ENCODE measurements at regions of chr7 and their contacts with region 1.

Region 1: DNA sequence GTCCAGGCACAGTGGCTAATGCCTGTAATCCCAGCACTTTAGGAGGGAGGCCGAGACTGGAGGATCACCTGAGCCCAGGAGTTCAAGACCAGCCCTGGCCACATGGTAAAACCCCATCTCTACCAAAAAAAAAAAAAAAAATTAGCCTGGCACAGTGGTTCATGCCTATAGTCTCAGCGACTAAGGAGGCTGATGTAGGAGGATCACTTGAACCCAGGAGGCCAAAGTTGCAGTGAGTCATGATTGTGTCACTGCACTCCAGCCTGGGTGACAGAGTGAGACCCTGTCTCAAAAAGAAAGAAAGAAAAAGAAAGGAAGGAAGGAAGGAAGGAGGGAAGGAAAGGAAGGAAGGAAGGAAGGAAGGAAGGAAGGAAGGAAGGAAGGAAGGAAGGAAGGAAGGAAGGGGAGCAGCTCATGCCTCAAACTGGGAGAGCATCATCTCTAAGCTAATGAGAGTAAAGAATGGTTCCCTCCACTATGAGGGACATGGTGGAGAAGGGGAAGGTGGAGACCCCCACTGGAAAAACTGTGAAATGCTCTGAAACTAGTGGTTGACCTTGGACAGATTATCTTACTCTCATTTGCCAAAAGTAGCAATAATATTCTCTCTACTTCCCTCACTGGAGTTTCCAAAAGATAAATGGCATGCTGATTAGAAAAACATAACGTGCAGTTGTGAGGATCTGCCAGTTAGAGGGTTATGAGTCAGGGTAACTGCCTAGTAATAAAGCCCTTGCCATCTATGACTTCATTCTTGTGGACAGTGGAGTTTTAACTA is 16.8 kb downstream of the GIMAP5 start:
- DNase-seq: peak; percentile 95
- H3K4me3 ChIP-seq: no peak overlapping the region
- H3K27ac ChIP-seq: peak overlapping the region; percentile 2
- H3K4me1 ChIP-seq: peaks cover 22% of the 10 kb centered on the region
- H3K27me3 ChIP-seq: no peaks in the 10 kb centered on the region
- CTCF ChIP-seq: peak; percentile 21 to 55
- POLR2A ChIP-seq: no peak

Region 2: GRCh38 chr7:150356265-150356897 is 397.6 kb before region 1 on chr7:
- CTCF ChIA-PET with region 1: interaction called, 4 read pairs
- POLR2A ChIA-PET with region 1: no interaction called
- dilution Hi-C with region 1: no loop called
- intact Hi-C with region 1: loop called (anchors 2 kb)
- DNase-seq: peak; percentile 64
- H3K4me3 ChIP-seq: no peak overlapping the region
- H3K27ac ChIP-seq: no peak overlapping the region
- H3K4me1 ChIP-seq: no peaks in the 10 kb centered on the region
- H3K27me3 ChIP-seq: peaks cover 0 to 2% of the 10 kb centered on the region in 2 experiments
- CTCF ChIP-seq: peak; percentile 57 to 62
- POLR2A ChIP-seq: no peak

Region 3: GRCh38 chr7:150466477-150466876 is 287.5 kb before region 1 on chr7:
- CTCF ChIA-PET with region 1: no interaction called
- POLR2A ChIA-PET with region 1: no interaction called
- dilution Hi-C with region 1: no loop called
- intact Hi-C with region 1: loop called (anchors 1 kb)
- DNase-seq: peak; percentile 93
- H3K4me3 ChIP-seq: peak overlapping the region in 2 of 3 experiments; percentile 30 to 77
- H3K27ac ChIP-seq: peak overlapping the region; percentile 53
- H3K4me1 ChIP-seq: peaks cover 22% of the 10 kb centered on the region
- H3K27me3 ChIP-seq: no peaks in the 10 kb centered on the region
- CTCF ChIP-seq: no peak
- POLR2A ChIP-seq: no peak

Region 4: GRCh38 chr7:150514748-150515222 is 239.2 kb before region 1 on chr7 and contains the start of gene GIMAP7:
- CTCF ChIA-PET with region 1: no interaction called
- POLR2A ChIA-PET with region 1: no interaction called
- dilution Hi-C with region 1: no loop called
- intact Hi-C with region 1: loop called (anchors 1 kb)
- DNase-seq: peak; percentile 81
- H3K4me3 ChIP-seq: peak within 1 kb of the TSS; percentile 69 to 92 (median 91)
- H3K27ac ChIP-seq: peak within 1 kb of the TSS; percentile 61
- H3K4me1 ChIP-seq: peaks cover 21% of the 10 kb centered on the region
- H3K27me3 ChIP-seq: no peaks in the 10 kb centered on the region
- CTCF ChIP-seq: no peak
- POLR2A ChIP-seq: peak; percentile 81
- total RNA-seq, gene GIMAP7: 42.4 and 51.1 TPM in 2 replicates

Region 5: DNA sequence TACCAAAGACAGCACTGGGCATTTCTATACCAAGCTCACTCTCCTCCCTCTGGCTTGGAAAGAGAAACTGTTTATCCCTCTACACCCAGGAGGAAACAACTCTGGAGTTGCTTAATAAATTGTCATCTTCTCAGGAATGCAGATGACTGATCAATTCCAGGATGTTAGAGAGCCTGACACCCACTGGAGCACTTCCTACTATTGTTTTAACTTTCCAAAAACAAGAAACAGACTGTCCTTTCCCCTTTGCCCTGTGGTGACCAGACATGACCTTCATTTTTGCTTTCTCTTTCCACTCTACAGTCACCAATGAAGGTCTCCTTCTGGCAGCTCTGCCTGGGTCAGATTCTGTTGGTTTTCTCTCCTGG is 167.2 kb before region 1 on chr7:
- CTCF ChIA-PET with region 1: interaction called, 3 read pairs
- POLR2A ChIA-PET with region 1: no interaction called
- dilution Hi-C with region 1: no loop called
- intact Hi-C with region 1: loop called (anchors 1 kb)
- DNase-seq: peak; percentile 96
- H3K4me3 ChIP-seq: peak overlapping the region in 1 of 3 experiments; percentile 24
- H3K27ac ChIP-seq: peak overlapping the region; percentile 93
- H3K4me1 ChIP-seq: peaks cover 34% of the 10 kb centered on the region
- H3K27me3 ChIP-seq: no peaks in the 10 kb centered on the region
- CTCF ChIP-seq: no peak
- POLR2A ChIP-seq: no peak

Region 6: DNA sequence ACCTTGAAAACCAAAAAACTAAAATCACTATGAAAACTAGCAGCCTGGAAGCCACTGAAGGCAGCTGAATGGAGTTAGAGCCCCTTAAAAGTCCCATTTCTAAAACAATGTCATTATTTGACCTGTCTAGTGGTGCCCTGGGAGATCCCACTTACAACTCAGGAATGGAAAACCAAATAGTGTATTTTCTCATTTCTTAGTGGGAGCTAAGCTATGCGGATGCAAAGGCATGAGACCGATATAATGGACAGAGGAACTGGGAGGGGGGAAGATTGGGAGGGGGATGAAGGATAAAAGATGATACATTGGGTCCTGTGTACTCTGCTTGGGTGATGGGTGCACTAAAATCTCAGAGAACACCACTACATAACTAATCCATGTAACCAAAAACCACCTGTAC is 78.3 kb before region 1 on chr7:
- CTCF ChIA-PET with region 1: interaction called, 3 read pairs
- POLR2A ChIA-PET with region 1: no interaction called
- dilution Hi-C with region 1: no loop called
- intact Hi-C with region 1: loop called (anchors 2 kb)
- DNase-seq: peak; percentile 43
- H3K4me3 ChIP-seq: no peak overlapping the region
- H3K27ac ChIP-seq: peak overlapping the region; percentile 48
- H3K4me1 ChIP-seq: peaks cover 19% of the 10 kb centered on the region
- H3K27me3 ChIP-seq: no peaks in the 10 kb centered on the region
- CTCF ChIP-seq: no peak
- POLR2A ChIP-seq: no peak

Region 7: DNA sequence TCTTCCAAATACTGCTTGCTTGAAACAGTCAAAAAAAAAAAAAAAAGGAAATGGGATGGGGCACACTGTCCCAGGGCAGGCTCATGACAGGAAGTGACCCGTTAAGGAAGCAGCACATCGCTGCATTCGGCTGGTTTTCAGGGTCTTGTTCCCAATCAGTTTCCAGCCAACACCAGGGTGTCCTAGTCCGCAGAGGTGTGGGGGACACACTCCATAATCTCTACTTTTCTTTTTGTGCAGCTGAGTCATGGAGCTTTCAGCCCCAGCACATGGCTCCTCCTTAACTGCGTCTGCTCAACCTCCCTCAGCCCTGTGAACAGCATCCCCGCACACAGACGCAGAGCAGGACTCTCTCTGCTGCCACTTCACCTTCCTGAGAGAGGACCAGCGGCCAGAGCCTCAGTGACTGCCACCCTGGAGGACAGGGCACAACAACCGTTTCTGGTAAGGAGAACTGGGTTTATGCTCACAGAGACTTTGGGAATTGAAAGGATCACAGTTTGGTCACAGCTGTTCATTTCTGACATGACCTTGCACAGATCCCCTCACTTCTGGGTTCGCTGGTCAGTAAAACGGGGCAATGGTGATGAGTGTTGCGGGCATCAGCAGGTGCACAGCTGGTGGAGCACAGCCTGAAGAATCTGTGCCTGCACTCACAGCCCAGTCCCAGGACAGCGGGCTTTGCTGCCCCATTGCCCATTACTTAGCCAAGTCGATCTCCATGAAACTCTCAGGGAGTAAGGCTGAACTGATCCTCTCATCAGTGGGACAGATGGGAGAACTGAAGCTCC is 16.6 kb before region 1 on chr7 and contains the start of gene GIMAP5:
- CTCF ChIA-PET with region 1: interaction called, 16 read pairs
- POLR2A ChIA-PET with region 1: no interaction called
- dilution Hi-C with region 1: no loop called
- intact Hi-C with region 1: loop called (anchors 1 kb)
- DNase-seq: peak; percentile 48
- H3K4me3 ChIP-seq: peak within 1 kb of the TSS in 2 of 3 experiments; percentile 32 to 46
- H3K27ac ChIP-seq: no peak within 1 kb of the TSS
- H3K4me1 ChIP-seq: peaks cover 27% of the 10 kb centered on the region
- H3K27me3 ChIP-seq: no peaks in the 10 kb centered on the region
- CTCF ChIP-seq: no peak
- POLR2A ChIP-seq: no peak
- total RNA-seq, gene GIMAP5: 0.44 and 0.85 TPM in 2 replicates